AG04450 (cell line): ENCODE measurements at regions of chr14 and their contacts with region 1.

Region 1: GRCh38 chr14:52711666-52712065 is 4.7 kb downstream of the PSMC6 start:
- DNase-seq: no peak
- H3K4me3 ChIP-seq: no peak overlapping the region
- H3K27ac ChIP-seq: no peak overlapping the region
- H3K27me3 ChIP-seq: no peaks in the 10 kb centered on the region
- CTCF ChIP-seq: no peak

Region 2: DNA sequence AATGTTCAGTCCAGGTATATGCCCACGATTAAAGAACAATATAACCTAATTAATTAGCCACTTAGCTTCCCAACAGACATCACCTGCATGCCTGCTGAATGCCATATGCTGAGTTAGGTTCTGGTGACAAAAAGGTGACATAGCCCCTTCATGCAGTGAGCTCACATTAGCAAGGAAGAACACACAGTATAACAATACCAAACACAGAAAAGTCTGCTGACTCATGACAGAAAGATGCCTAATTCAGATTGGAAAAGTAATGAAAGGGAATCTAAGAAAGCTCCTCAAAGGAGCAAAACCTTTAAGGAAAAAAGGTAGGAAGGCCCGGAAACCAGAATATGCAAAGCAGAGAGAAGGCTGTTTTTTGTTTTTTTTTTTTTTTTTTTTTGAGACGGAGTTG is 180.1 kb after region 1 on chr14:
- CTCF ChIA-PET with region 1: no interaction called
- POLR2A ChIA-PET with region 1: interaction called, 10 read pairs
- DNase-seq: no peak
- H3K4me3 ChIP-seq: no peak overlapping the region
- H3K27ac ChIP-seq: no peak overlapping the region
- H3K27me3 ChIP-seq: no peaks in the 10 kb centered on the region
- CTCF ChIP-seq: no peak